Common myeloid progenitor, CD34-positive (primary cell): ENCODE measurements at regions of chr22 and their contacts with region 1.

Region 1: GRCh38 chr22:24466716-24467328 is 28.3 kb upstream of the UPB1 start:
- DNase-seq: peak in 1 of 3 donors; percentile 26
- H3K4me3 ChIP-seq: no peak overlapping the region
- H3K27ac ChIP-seq: no peak overlapping the region
- H3K4me1 ChIP-seq: peaks cover 11 to 19% (median 12%) of the 10 kb centered on the region in 4 experiments
- H3K27me3 ChIP-seq: no peaks in the 10 kb centered on the region

Region 2: GRCh38 chr22:24338726-24339451 is 127.9 kb before region 1 on chr22:
- CTCF ChIA-PET with region 1: no interaction called
- POLR2A ChIA-PET with region 1: no interaction called
- DNase-seq: no peak
- H3K4me3 ChIP-seq: no peak overlapping the region
- H3K27ac ChIP-seq: no peak overlapping the region
- H3K4me1 ChIP-seq: peaks cover 9 to 22% (median 12%) of the 10 kb centered on the region in 4 experiments
- H3K27me3 ChIP-seq: no peaks in the 10 kb centered on the region

Region 3: DNA sequence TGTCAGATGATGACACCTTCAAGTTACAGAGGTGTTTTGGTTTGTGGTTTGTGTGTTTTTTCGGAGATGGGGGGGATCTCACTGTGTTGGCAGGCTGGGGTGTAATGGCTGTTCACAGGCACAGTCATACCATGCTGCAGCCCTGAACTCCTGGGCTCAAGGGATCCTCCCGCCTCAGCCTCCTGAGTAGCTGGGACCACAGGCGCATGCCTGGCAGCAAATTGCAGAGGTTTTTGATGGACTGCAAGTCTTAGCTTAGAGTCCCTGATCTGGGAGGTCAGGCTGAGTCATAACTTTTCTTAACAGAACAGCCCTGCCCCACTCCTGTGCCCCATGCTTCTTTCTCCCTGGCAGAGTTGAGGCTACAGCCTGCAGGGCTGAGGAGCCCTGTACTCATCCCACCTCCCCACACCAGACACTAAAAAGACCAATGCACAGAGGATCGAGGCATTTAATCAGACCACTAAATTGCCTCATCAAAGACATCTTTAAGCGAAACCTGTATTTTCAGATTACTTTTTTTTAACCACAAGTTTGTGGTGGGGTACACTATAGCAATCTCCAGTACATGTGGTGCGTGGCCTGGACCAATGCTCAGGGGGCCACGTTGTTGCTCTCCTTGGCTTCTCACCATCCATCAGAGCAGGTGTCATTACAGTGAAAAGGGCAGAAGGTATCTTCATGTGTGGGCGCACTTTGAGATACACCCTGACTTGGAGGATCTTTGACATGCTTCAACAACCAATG is 56.5 kb before region 1 on chr22:
- CTCF ChIA-PET with region 1: no interaction called
- POLR2A ChIA-PET with region 1: no interaction called
- DNase-seq: no peak
- H3K4me3 ChIP-seq: no peak overlapping the region
- H3K27ac ChIP-seq: no peak overlapping the region
- H3K4me1 ChIP-seq: peaks cover 0 to 24% (median 20%) of the 10 kb centered on the region in 4 experiments
- H3K27me3 ChIP-seq: no peaks in the 10 kb centered on the region

Region 4: DNA sequence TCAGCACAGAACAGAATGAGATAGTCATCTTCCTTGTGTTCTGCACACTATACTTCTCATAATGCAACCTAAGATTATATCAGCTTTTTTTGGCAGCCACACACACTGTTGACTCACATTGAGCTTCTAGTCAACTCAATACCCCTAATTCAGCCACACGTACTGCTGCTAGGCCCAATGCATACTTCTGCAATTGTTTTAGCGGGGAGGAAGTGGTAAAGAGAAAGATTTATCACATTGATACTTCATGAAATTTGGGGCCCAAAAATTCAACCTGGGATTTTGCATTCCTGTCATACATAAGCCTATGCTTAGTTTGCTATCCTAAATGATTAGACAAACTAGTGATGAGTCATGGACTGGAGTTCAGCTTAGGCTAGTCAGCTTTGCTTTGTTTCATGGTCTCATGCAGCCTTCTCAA is 19.7 kb after region 1 on chr22:
- CTCF ChIA-PET with region 1: interaction called, 11 read pairs
- POLR2A ChIA-PET with region 1: no interaction called
- DNase-seq: peak in 2 of 3 donors; percentile 86 to 90
- H3K4me3 ChIP-seq: no peak overlapping the region
- H3K27ac ChIP-seq: no peak overlapping the region
- H3K4me1 ChIP-seq: peaks cover 0 to 11% (median 5%) of the 10 kb centered on the region in 4 experiments
- H3K27me3 ChIP-seq: no peaks in the 10 kb centered on the region

Region 5: GRCh38 chr22:24555157-24556039 is 88.6 kb after region 1 on chr22 and contains the start of gene SNRPD3:
- CTCF ChIA-PET with region 1: no interaction called
- POLR2A ChIA-PET with region 1: no interaction called
- DNase-seq: peak; percentile 98 to 99 (median 99)
- H3K4me3 ChIP-seq: peak within 1 kb of the TSS; percentile 85 to 94 (median 92)
- H3K27ac ChIP-seq: peak within 1 kb of the TSS; percentile 82 to 93
- H3K4me1 ChIP-seq: peaks cover 24 to 57% (median 44%) of the 10 kb centered on the region in 4 experiments
- H3K27me3 ChIP-seq: no peaks in the 10 kb centered on the region